IMR-90 (cell line): ENCODE measurements at regions of chr6 and their contacts with region 1.

Region 1: GRCh38 chr6:133891149-133891926 is 2.4 kb downstream of the TCF21 start:
- DNase-seq: peak; percentile 39
- ATAC-seq: no peak
- H3K4me3 ChIP-seq: peak overlapping the region; percentile 99
- H3K27ac ChIP-seq: peak overlapping the region; percentile 97
- H3K4me1 ChIP-seq: peaks cover 13% of the 10 kb centered on the region
- H3K27me3 ChIP-seq: no peaks in the 10 kb centered on the region
- CTCF ChIP-seq: no peak
- POLR2A ChIP-seq: no peak
- RAD21 ChIP-seq: no peak

Region 2: DNA sequence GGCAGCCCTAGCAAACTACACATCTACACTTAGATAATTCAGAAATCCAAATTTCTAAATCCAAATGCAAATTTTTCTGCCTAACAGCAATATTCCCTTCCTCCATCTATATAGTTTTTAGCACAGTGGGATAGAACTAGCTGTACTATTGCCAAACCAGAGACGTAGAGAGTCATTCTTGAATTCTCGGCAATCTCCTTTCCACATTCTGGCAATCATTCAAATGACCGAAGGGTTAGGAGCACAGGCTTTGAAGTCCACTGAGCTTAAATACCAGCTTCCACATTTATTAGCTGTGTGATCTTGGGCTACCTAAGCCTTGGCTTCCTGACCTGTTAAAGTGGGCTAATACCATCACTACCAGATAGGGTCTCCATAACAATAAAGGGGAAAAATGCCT is 1080.1 kb before region 1 on chr6:
- CTCF ChIA-PET with region 1: no interaction called
- POLR2A ChIA-PET with region 1: no interaction called
- dilution Hi-C with region 1: no loop called
- in situ Hi-C with region 1: no loop called
- intact Hi-C with region 1: no loop called
- DNase-seq: peak; percentile 35
- ATAC-seq: no peak
- H3K4me3 ChIP-seq: no peak overlapping the region
- H3K27ac ChIP-seq: no peak overlapping the region
- H3K4me1 ChIP-seq: peaks cover 2% of the 10 kb centered on the region
- H3K27me3 ChIP-seq: peaks cover 4% of the 10 kb centered on the region
- CTCF ChIP-seq: no peak
- POLR2A ChIP-seq: no peak
- RAD21 ChIP-seq: no peak

Region 3: DNA sequence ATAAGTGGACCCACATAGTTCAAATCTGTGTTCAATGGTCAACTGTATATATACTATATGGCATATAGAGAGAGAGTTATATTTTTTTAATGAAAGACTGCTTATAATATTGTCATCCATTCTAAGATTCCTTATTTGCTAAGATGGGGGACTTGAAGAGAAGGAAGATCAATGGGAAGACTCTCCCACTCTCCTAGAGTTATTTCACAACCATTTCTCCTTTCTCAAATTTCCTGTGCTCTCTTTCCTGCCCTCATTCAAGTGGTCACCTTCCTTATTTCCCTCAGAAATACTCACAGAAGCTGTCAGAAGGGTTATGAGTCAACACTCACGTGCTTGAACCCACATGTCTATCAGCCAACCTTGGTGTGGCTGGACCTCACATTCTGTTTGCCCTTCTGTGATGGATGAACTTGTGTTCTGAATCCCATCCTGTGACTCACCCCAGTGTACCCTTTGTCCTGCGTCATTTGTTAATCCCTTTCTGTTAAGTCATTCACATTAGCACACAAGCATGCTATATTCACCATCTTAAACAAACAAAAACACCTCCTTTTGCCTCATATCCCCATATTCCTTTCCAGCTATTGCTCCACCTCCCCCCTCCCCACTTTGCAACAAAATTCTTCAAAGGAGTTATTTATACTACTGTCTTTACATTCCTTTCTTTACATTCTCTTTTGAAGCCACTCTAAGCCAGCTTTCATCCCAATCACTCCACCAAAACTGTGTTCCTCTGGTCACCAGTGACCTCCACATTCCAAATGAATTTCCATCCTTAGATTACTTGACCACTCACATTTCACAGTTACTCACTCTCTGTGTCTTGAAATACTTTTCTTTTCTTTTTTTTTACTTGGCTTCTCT is 281.7 kb before region 1 on chr6:
- CTCF ChIA-PET with region 1: no interaction called
- POLR2A ChIA-PET with region 1: no interaction called
- dilution Hi-C with region 1: no loop called
- in situ Hi-C with region 1: loop called (anchors 25 kb)
- intact Hi-C with region 1: no loop called
- DNase-seq: peak; percentile 100
- ATAC-seq: peak; percentile 81
- H3K4me3 ChIP-seq: no peak overlapping the region
- H3K27ac ChIP-seq: peak overlapping the region; percentile 98; the same call in 1 of the 2 replicates
- H3K4me1 ChIP-seq: peaks cover 30% of the 10 kb centered on the region
- H3K27me3 ChIP-seq: no peaks in the 10 kb centered on the region
- CTCF ChIP-seq: no peak
- POLR2A ChIP-seq: peak; percentile 51; the same call in 1 of the 2 replicates
- RAD21 ChIP-seq: peak; percentile 6

Region 4: GRCh38 chr6:133631421-133631820 is 259.9 kb before region 1 on chr6:
- CTCF ChIA-PET with region 1: no interaction called
- POLR2A ChIA-PET with region 1: interaction called, 5 read pairs
- dilution Hi-C with region 1: no loop called
- in situ Hi-C with region 1: no loop called
- intact Hi-C with region 1: loop called (anchors 1 kb)
- DNase-seq: peak; percentile 73
- ATAC-seq: peak; percentile 87
- H3K4me3 ChIP-seq: no peak overlapping the region
- H3K27ac ChIP-seq: peak overlapping the region; percentile 69
- H3K4me1 ChIP-seq: peaks cover 20% of the 10 kb centered on the region
- H3K27me3 ChIP-seq: no peaks in the 10 kb centered on the region
- CTCF ChIP-seq: peak; percentile 46
- POLR2A ChIP-seq: no peak
- RAD21 ChIP-seq: 0 out of 2 replicates have a peak, but pooled peaks have one; percentile 15

Region 5: GRCh38 chr6:133768656-133769295 is 122.6 kb before region 1 on chr6:
- CTCF ChIA-PET with region 1: no interaction called
- POLR2A ChIA-PET with region 1: no interaction called
- dilution Hi-C with region 1: no loop called
- in situ Hi-C with region 1: no loop called
- intact Hi-C with region 1: loop called (anchors 10 kb)
- DNase-seq: no peak
- ATAC-seq: no peak
- H3K4me3 ChIP-seq: no peak overlapping the region
- H3K27ac ChIP-seq: no peak overlapping the region
- H3K4me1 ChIP-seq: peaks cover 16% of the 10 kb centered on the region
- H3K27me3 ChIP-seq: no peaks in the 10 kb centered on the region
- CTCF ChIP-seq: no peak
- POLR2A ChIP-seq: no peak
- RAD21 ChIP-seq: no peak

Region 6: GRCh38 chr6:133877116-133877515 is 14.2 kb before region 1 on chr6:
- CTCF ChIA-PET with region 1: no interaction called
- POLR2A ChIA-PET with region 1: no interaction called
- dilution Hi-C with region 1: no loop called
- in situ Hi-C with region 1: no loop called
- intact Hi-C with region 1: no loop called
- DNase-seq: no peak
- ATAC-seq: no peak
- H3K4me3 ChIP-seq: no peak overlapping the region; the same call in 1 of the 2 replicates
- H3K27ac ChIP-seq: no peak overlapping the region
- H3K4me1 ChIP-seq: no peaks in the 10 kb centered on the region
- H3K27me3 ChIP-seq: no peaks in the 10 kb centered on the region
- CTCF ChIP-seq: no peak
- POLR2A ChIP-seq: no peak
- RAD21 ChIP-seq: no peak

Region 7: GRCh38 chr6:133916650-133917151 is 25.4 kb after region 1 on chr6:
- CTCF ChIA-PET with region 1: no interaction called
- POLR2A ChIA-PET with region 1: interaction called, 4 read pairs
- dilution Hi-C with region 1: no loop called
- in situ Hi-C with region 1: no loop called
- intact Hi-C with region 1: loop called (anchors 2 kb)
- DNase-seq: peak; percentile 91
- ATAC-seq: peak; percentile 88
- H3K4me3 ChIP-seq: no peak overlapping the region
- H3K27ac ChIP-seq: peak overlapping the region; percentile 30; the same call in 1 of the 2 replicates
- H3K4me1 ChIP-seq: peaks cover 6% of the 10 kb centered on the region; the same call in 1 of the 2 replicates
- H3K27me3 ChIP-seq: no peaks in the 10 kb centered on the region
- CTCF ChIP-seq: peak; percentile 94
- POLR2A ChIP-seq: peak; percentile 44; the same call in 1 of the 2 replicates
- RAD21 ChIP-seq: peak; percentile 95